ENCODE measurements at regions of chr16 and their contacts with region 1.

Region 1: DNA sequence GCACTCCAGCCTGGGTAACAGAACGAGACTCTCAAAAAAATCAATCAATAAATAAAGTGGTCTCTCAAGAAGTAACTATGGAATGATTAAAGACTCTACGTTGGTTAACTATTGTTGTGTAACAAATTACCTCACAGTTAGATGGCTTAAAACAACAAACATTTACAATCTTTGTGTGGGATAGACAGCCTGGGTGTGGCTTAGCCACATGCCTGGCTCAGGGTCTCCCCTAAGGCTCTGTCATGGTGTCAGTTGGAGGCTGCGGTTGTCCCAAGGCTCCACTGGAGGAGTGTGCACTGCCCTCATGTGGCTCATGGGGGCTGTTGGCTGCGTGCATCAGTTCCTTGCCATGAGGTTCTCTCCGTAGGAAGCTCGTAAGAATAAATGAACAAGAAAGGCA is 294.5 kb downstream of the SNX29 start:
- DNase-seq: no peak
- H3K4me3 ChIP-seq: no peak overlapping the region
- H3K27ac ChIP-seq: no peak overlapping the region
- H3K27me3 ChIP-seq: no peaks in the 10 kb centered on the region
- CTCF ChIP-seq: peak; percentile 50

Region 2: GRCh38 chr16:12811441-12812383 is 540.7 kb after region 1 on chr16:
- CTCF ChIA-PET with region 1: interaction called, 13 read pairs
- POLR2A ChIA-PET with region 1: no interaction called
- DNase-seq: no peak
- H3K4me3 ChIP-seq: no peak overlapping the region
- H3K27ac ChIP-seq: no peak overlapping the region
- H3K27me3 ChIP-seq: no peaks in the 10 kb centered on the region
- CTCF ChIP-seq: no peak